Right lobe of liver (tissue), 6 donors: ENCODE measurements at regions of chr11 and their contacts with region 1.

Region 1: GRCh38 chr11:45655347-45655756 is 10.1 kb downstream of the CHST1 start:
- DNase-seq: peak; percentile 72 to 78 (median 75)
- ATAC-seq: peak; percentile 76 to 91 (median 86)
- H3K4me3 ChIP-seq: no peak overlapping the region
- H3K27ac ChIP-seq: no peak overlapping the region
- H3K4me1 ChIP-seq: peaks cover 0 to 4% (median 0%) of the 10 kb centered on the region in 4 donors
- H3K27me3 ChIP-seq: no peaks in the 10 kb centered on the region
- CTCF ChIP-seq: peak; percentile 78 to 95 (median 90)
- POLR2A ChIP-seq: no peak

Region 2: DNA sequence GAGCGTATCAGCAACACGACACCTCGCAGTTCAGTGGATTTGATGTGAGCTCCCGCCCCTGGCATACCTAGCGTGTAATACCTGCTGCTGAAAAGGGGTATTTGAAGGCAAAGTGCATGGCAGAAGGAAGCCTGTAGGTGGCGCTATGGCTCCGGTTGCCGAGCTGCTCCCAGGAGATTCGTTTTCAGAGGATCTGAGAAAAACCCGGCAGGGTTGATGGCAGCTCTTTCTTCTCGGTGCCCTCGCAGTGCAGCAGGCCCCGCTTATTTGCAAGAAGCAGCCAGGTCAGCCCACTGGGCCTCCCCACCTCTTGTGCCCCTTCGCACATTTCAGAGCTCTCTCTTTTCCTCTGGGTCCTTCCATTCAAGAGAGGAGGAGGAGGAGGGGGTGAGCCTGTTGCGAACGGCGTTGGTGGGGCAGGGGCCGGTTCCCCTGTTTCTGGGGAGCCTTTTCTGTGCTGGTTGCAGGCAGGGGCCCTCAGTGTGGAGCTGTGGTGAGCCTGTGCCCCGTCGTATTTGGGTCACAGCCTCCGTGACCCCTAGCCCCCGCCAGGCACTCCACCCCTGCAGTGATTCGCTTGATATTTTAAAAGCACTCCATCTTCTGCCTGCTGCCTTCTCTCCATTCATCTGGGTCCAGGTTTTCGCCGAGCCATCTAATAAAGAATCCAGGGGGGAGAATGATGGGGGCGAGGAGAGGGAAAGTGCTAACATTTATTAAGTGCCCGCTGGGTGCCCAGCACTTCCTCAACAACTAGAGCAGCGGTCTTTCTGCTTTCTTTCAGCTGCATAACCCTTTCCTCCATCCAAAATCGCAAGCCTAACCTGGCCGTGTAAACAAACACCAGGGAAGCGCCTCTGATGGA is 283.9 kb before region 1 on chr11:
- intact Hi-C with region 1: loop called (anchors 10 kb)
- DNase-seq: peak; percentile 63 to 77 (median 76)
- ATAC-seq: peak; percentile 82 to 90 (median 86)
- H3K4me3 ChIP-seq: no peak overlapping the region
- H3K27ac ChIP-seq: no peak overlapping the region
- H3K4me1 ChIP-seq: peaks cover 0 to 6% (median 2%) of the 10 kb centered on the region in 4 donors
- H3K27me3 ChIP-seq: no peaks in the 10 kb centered on the region
- CTCF ChIP-seq: peak; percentile 88 to 97 (median 94)
- POLR2A ChIP-seq: no peak